ENCODE measurements at regions of chr10 and their contacts with region 1.

Region 1: DNA sequence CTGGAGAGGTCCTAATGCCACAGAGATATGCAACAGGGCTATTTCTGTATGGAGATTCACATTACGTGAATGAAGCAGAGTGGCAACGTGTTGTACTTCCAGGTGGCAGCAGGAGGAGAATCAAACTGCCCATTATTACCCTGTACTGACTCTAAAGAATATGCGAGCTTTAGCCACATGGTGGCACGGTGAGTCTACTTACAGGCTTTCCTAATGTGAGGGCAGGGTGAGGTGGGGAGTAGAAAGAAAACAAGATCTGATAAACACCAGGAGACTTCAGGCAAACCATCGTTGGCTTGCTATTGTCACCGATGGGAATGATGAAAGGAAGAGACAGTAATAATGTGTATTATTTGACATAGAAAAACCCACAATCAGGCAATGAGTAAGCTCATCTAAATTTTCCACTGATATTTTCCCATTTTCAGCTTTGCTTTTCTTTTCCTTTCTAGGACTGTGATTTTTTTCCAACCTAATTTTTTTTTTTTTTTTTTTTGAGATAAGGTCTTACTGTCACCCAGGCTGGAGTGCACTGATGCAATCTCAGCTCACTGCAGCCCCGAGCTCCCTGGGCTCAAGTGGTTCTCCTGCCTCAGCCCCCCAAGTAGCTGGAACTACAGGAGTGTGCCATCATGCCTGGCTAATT is 164.3 kb downstream of the BTAF1 start:
- DNase-seq: peak; percentile 39 to 70
- ATAC-seq: peak; percentile 96 to 98 (median 97)
- H3K4me3 ChIP-seq: no peak overlapping the region
- H3K27ac ChIP-seq: peak overlapping the region; percentile 42
- H3K4me1 ChIP-seq: peaks cover 24% of the 10 kb centered on the region
- H3K27me3 ChIP-seq: no peaks in the 10 kb centered on the region
- CTCF ChIP-seq: peak; percentile 78

Region 2: GRCh38 chr10:92240289-92241157 is 152.7 kb after region 1 on chr10:
- intact Hi-C with region 1: loop called (anchors 2 to 5 kb)
- DNase-seq: peak; percentile 26 to 54
- ATAC-seq: peak; percentile 48 to 75 (median 65)
- H3K4me3 ChIP-seq: peak overlapping the region; percentile 79
- H3K27ac ChIP-seq: peak overlapping the region; percentile 92
- H3K4me1 ChIP-seq: peaks cover 42% of the 10 kb centered on the region
- H3K27me3 ChIP-seq: no peaks in the 10 kb centered on the region
- CTCF ChIP-seq: no peak

Region 3: GRCh38 chr10:92290837-92291615 is 203.2 kb after region 1 on chr10 and contains the starts of genes CPEB3 and MARCHF5:
- intact Hi-C with region 1: loop called (anchors 2 to 5 kb)
- DNase-seq: peak; percentile 96 to 98
- ATAC-seq: peak; percentile 96 to 99 (median 98)
- H3K4me3 ChIP-seq: peak within 1 kb of the TSS; percentile 90
- H3K27ac ChIP-seq: peak within 1 kb of the TSS; percentile 95
- H3K4me1 ChIP-seq: peaks cover 5% of the 10 kb centered on the region
- H3K27me3 ChIP-seq: no peaks in the 10 kb centered on the region
- CTCF ChIP-seq: peak; percentile 78
- total RNA-seq, gene CPEB3: 6.1 to 16.9 (median 14.3) TPM
- total RNA-seq, gene MARCHF5: 28.3 to 52.3 (median 32.9) TPM

Region 4: DNA sequence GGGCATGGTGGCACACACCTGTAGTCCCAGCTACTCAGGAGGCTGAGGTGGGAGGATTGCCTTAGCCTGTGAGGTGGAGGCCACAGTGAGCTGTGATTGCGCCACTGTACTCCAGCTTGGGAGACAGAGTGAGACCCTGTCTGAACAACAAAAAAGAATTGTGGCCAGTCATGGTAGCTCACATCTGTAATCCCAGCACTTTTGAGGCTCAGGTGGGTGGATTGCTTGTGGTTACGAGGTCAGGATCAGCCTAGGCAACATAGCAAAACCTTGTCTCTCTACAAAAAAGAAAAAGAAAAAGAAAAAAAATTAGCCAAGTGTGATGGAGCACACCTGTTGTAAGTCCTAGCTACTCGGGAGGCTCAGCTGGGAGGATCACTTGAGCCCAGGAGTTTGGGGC is 225.9 kb after region 1 on chr10:
- intact Hi-C with region 1: no loop called
- DNase-seq: no peak
- ATAC-seq: no peak
- H3K4me3 ChIP-seq: no peak overlapping the region
- H3K27ac ChIP-seq: no peak overlapping the region
- H3K4me1 ChIP-seq: no peaks in the 10 kb centered on the region
- H3K27me3 ChIP-seq: no peaks in the 10 kb centered on the region
- CTCF ChIP-seq: no peak

Region 5: GRCh38 chr10:92432596-92432995 is 344.7 kb after region 1 on chr10:
- intact Hi-C with region 1: loop called (anchors 2 to 5 kb)
- DNase-seq: no peak
- ATAC-seq: no peak
- H3K4me3 ChIP-seq: no peak overlapping the region
- H3K27ac ChIP-seq: no peak overlapping the region
- H3K4me1 ChIP-seq: peaks cover 11% of the 10 kb centered on the region
- H3K27me3 ChIP-seq: no peaks in the 10 kb centered on the region
- CTCF ChIP-seq: no peak

Measured in psoas muscle (tissue), 8 donors.